K562 (cell line): ENCODE measurements at regions of chr2 and their contacts with region 1.

Region 1: GRCh38 chr2:112343827-112344585 is 68.6 kb downstream of the ZC3H6 start:
- DNase-seq: no peak
- ATAC-seq: no peak; the same call in 2 of the 3 replicates
- H3K4me3 ChIP-seq: no peak overlapping the region
- H3K27ac ChIP-seq: no peak overlapping the region
- H3K4me1 ChIP-seq: peaks cover 0 to 8% of the 10 kb centered on the region in 2 experiments; a peak in 2 of 5 replicates
- H3K27me3 ChIP-seq: no peaks in the 10 kb centered on the region
- CTCF ChIP-seq: no peak
- EP300 ChIP-seq: no peak
- POLR2A ChIP-seq: no peak
- RAD21 ChIP-seq: no peak

Region 2: DNA sequence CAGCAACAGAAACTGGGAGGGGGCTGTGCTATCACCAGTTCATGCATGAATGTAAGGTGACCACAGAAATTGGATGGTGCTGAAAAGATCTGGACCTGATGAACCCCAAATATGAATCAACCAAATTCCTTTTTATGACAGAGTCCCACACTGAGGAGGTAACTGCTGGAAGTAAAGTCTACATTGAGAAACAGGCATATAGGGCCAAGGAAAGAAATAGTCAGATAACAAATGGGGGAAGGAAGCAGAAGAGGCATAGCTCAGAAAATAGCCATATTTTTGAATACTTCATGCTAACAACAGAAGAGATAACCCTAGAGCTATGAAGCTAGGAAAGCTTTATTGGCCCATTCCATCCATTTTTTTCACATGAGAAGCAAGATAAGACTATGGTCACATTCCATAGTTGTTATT is 42.8 kb before region 1 on chr2:
- CTCF ChIA-PET with region 1: no interaction called
- POLR2A ChIA-PET with region 1: no interaction called
- in situ Hi-C with region 1: no loop called
- intact Hi-C with region 1: no loop called
- DNase-seq: no peak
- ATAC-seq: no peak
- H3K4me3 ChIP-seq: no peak overlapping the region
- H3K27ac ChIP-seq: no peak overlapping the region
- H3K4me1 ChIP-seq: peaks cover 0 to 6% of the 10 kb centered on the region in 2 experiments; a peak in 1 of 5 replicates
- H3K27me3 ChIP-seq: no peaks in the 10 kb centered on the region
- CTCF ChIP-seq: no peak
- EP300 ChIP-seq: no peak
- POLR2A ChIP-seq: no peak
- RAD21 ChIP-seq: no peak

Region 3: GRCh38 chr2:112465382-112465781 is 121.4 kb after region 1 on chr2:
- CTCF ChIA-PET with region 1: no interaction called
- POLR2A ChIA-PET with region 1: no interaction called
- in situ Hi-C with region 1: no loop called
- intact Hi-C with region 1: loop called (anchors 10 kb)
- DNase-seq: peak in 2 of 4 experiments; percentile 34 to 35
- ATAC-seq: peak; percentile 76
- H3K4me3 ChIP-seq: no peak overlapping the region
- H3K27ac ChIP-seq: no peak overlapping the region
- H3K4me1 ChIP-seq: no peaks in the 10 kb centered on the region
- H3K27me3 ChIP-seq: peaks cover 0 to 7% of the 10 kb centered on the region in 2 experiments; a peak in 2 of 5 replicates
- CTCF ChIP-seq: peak; percentile 22 to 49 (median 34); a peak in 4 of 6 replicates
- EP300 ChIP-seq: no peak
- POLR2A ChIP-seq: no peak
- RAD21 ChIP-seq: peak in 1 of 2 experiments; percentile 29; a peak in 2 of 4 replicates

Region 4: GRCh38 chr2:112749755-112750559 is 406.0 kb after region 1 on chr2:
- CTCF ChIA-PET with region 1: no interaction called
- POLR2A ChIA-PET with region 1: no interaction called
- in situ Hi-C with region 1: no loop called
- intact Hi-C with region 1: no loop called
- DNase-seq: peak; percentile 63 to 82 (median 74)
- ATAC-seq: peak; percentile 93
- H3K4me3 ChIP-seq: no peak overlapping the region
- H3K27ac ChIP-seq: no peak overlapping the region
- H3K4me1 ChIP-seq: no peaks in the 10 kb centered on the region; a peak in 1 of 5 replicates
- H3K27me3 ChIP-seq: no peaks in the 10 kb centered on the region
- CTCF ChIP-seq: peak; percentile 92 to 93 (median 93)
- EP300 ChIP-seq: 0 out of 2 replicates have a peak, but pooled peaks have one; percentile 2
- POLR2A ChIP-seq: no peak
- RAD21 ChIP-seq: peak; percentile 96